Body of pancreas (tissue), 4 donors: ENCODE measurements at regions of chr12 and their contacts with region 1.

Region 1: DNA sequence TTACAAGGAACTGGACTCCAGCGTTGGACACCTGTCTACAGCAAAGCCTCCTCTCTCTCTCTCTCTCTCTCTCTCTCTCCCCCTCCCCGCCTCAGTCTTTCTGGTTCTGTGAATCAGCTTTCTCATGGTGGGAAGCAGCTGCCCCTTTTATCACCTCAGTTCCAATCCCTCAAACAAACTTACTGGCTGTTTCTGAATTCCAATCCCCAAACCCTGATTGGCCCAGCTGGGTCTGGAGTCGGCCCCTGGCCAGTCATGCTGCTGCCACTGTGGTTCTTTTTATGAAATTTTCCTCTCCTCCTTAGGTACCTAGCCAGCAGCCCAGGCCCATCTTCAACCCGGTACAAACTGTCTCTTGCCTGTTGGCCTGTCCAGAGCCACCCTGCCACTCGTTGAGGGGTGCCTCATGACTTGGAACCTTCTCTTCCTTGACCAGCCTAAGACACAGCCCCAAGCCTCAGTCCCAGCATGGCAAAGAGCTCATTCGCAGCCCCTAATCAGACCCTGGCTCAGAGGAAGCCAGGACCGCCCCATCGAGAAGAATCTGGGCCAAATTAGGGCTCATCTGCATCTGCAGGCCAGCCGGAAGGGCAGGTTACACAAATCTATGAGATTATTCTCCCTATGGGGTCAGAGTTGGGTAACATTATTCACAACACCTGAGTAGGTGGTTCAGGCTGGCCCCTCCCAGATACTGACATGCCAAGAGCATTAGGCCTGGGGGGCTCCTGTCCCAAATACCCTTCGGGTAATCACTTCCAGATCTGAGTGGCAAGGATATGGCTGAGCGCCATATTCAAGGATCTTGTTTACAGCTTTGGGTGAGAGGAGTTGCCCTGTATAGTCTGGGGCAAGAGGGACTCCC is 9.5 kb upstream of the MORN3 start:
- DNase-seq: no peak
- ATAC-seq: no peak
- H3K4me3 ChIP-seq: no peak overlapping the region
- H3K27ac ChIP-seq: peak overlapping the region in 3 of 4 donors; percentile 6 to 39 (median 21)
- H3K4me1 ChIP-seq: peaks cover under 1% of the 10 kb centered on the region
- H3K27me3 ChIP-seq: no peaks in the 10 kb centered on the region
- CTCF ChIP-seq: no peak
- POLR2A ChIP-seq: no peak

Region 2: GRCh38 chr12:121499929-121500793 is 178.8 kb before region 1 on chr12:
- intact Hi-C with region 1: loop called (anchors 5 kb)
- DNase-seq: peak; percentile 72 to 83 (median 75)
- ATAC-seq: peak; percentile 81
- H3K4me3 ChIP-seq: no peak overlapping the region
- H3K27ac ChIP-seq: no peak overlapping the region
- H3K4me1 ChIP-seq: peaks cover 5% of the 10 kb centered on the region
- H3K27me3 ChIP-seq: no peaks in the 10 kb centered on the region
- CTCF ChIP-seq: peak; percentile 76 to 100 (median 85)
- POLR2A ChIP-seq: no peak

Region 3: GRCh38 chr12:121545480-121545879 is 133.5 kb before region 1 on chr12:
- intact Hi-C with region 1: loop called (anchors 5 kb)
- DNase-seq: no peak
- ATAC-seq: no peak
- H3K4me3 ChIP-seq: no peak overlapping the region
- H3K27ac ChIP-seq: no peak overlapping the region
- H3K4me1 ChIP-seq: no peaks in the 10 kb centered on the region
- H3K27me3 ChIP-seq: no peaks in the 10 kb centered on the region
- CTCF ChIP-seq: no peak
- POLR2A ChIP-seq: no peak

Region 4: GRCh38 chr12:121634836-121635235 is 44.1 kb before region 1 on chr12:
- intact Hi-C with region 1: no loop called
- DNase-seq: no peak
- ATAC-seq: no peak
- H3K4me3 ChIP-seq: no peak overlapping the region
- H3K27ac ChIP-seq: no peak overlapping the region
- H3K4me1 ChIP-seq: peaks cover 13% of the 10 kb centered on the region
- H3K27me3 ChIP-seq: no peaks in the 10 kb centered on the region
- CTCF ChIP-seq: no peak
- POLR2A ChIP-seq: no peak